ENCODE measurements at regions of chr3 and their contacts with region 1.

Region 1: DNA sequence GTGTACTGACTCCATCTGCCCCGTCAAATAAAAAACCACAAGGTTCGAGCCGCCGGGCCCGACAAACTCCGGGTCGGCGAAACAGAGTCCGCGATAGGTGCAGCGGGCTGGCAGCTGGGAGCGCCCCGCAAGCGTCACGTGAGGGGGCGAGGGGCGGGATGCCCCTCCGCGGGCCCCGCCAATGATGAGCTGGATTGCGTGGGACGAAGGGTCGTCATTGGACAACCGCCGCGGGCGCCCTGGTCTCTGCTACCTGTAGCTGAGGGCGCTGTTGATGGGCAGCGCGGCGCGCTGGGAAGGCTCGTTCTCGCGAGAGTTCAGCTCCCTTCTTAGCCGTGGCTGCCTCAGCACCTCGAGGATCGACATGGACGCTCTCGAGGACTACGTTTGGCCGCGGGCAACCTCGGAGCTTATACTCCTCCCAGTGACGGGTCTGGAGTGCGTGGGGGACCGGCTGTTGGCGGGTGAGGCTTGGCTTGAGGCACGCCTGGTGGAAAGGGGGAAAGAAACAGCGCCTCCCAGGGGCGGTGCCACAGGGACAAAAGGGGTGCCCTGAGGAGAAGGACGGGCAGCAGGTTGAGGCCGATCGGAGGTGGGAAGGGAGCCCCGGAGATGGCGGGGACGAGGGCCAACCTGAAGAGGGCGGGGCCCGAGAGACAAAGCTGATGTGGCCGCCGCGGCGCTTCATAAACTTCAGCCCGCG is at the start of gene WDR6:
- DNase-seq: peak; percentile 98
- ATAC-seq: peak; percentile 86
- H3K4me3 ChIP-seq: peak within 1 kb of the TSS; percentile 69 to 99 (median 94)
- H3K4me3 Mint-ChIP-seq: peak within 1 kb of the TSS; percentile 100
- H3K27ac ChIP-seq: peak within 1 kb of the TSS; percentile 95 to 96
- H3K27ac Mint-ChIP-seq: peak within 1 kb of the TSS; percentile 99
- H3K4me1 ChIP-seq: peaks cover 15 to 18% of the 10 kb centered on the region in 2 donors
- H3K4me1 Mint-ChIP-seq: peaks cover 27% of the 10 kb centered on the region
- H3K27me3 ChIP-seq: no peaks in the 10 kb centered on the region
- H3K27me3 Mint-ChIP-seq: no peaks in the 10 kb centered on the region
- CTCF ChIP-seq: peak; percentile 52
- total RNA-seq, gene WDR6: 270 and 287 TPM in 2 replicates

Region 2: DNA sequence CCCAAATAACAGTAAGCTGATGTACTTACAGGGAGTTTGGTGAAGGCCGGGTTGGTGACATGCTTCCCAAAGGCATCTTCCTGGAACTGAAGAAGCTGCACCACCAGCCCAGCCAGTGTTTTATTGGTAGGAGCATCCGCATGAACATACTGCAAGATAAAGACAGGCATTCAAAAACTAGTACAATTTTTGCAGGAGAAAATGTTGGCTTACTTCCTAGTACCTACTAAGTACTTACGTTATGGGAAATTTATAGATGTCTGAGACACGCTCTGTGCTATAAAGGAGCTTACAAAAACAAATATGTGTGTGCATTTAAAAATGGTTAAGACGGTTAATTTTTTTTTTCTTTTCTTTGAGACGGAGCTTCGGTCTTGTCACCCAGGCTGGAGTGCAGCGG is 1234.4 kb before region 1 on chr3:
- CTCF ChIA-PET with region 1: no interaction called
- POLR2A ChIA-PET with region 1: no interaction called
- intact Hi-C with region 1: no loop called
- DNase-seq: no peak
- ATAC-seq: no peak
- H3K4me3 ChIP-seq: no peak overlapping the region
- H3K4me3 Mint-ChIP-seq: no peak overlapping the region
- H3K27ac ChIP-seq: no peak overlapping the region
- H3K27ac Mint-ChIP-seq: no peak overlapping the region
- H3K4me1 ChIP-seq: peaks cover under 1 to 6% of the 10 kb centered on the region in 2 donors
- H3K4me1 Mint-ChIP-seq: peaks cover 20% of the 10 kb centered on the region
- H3K27me3 ChIP-seq: no peaks in the 10 kb centered on the region
- H3K27me3 Mint-ChIP-seq: no peaks in the 10 kb centered on the region
- CTCF ChIP-seq: no peak

Region 3: GRCh38 chr3:48119505-48120193 is 887.6 kb before region 1 on chr3:
- CTCF ChIA-PET with region 1: no interaction called
- POLR2A ChIA-PET with region 1: no interaction called
- intact Hi-C with region 1: no loop called
- DNase-seq: no peak
- ATAC-seq: no peak
- H3K4me3 ChIP-seq: no peak overlapping the region
- H3K4me3 Mint-ChIP-seq: no peak overlapping the region
- H3K27ac ChIP-seq: no peak overlapping the region
- H3K27ac Mint-ChIP-seq: no peak overlapping the region
- H3K4me1 ChIP-seq: no peaks in the 10 kb centered on the region
- H3K4me1 Mint-ChIP-seq: peaks cover 2% of the 10 kb centered on the region
- H3K27me3 ChIP-seq: no peaks in the 10 kb centered on the region
- H3K27me3 Mint-ChIP-seq: no peaks in the 10 kb centered on the region
- CTCF ChIP-seq: no peak

Region 4: DNA sequence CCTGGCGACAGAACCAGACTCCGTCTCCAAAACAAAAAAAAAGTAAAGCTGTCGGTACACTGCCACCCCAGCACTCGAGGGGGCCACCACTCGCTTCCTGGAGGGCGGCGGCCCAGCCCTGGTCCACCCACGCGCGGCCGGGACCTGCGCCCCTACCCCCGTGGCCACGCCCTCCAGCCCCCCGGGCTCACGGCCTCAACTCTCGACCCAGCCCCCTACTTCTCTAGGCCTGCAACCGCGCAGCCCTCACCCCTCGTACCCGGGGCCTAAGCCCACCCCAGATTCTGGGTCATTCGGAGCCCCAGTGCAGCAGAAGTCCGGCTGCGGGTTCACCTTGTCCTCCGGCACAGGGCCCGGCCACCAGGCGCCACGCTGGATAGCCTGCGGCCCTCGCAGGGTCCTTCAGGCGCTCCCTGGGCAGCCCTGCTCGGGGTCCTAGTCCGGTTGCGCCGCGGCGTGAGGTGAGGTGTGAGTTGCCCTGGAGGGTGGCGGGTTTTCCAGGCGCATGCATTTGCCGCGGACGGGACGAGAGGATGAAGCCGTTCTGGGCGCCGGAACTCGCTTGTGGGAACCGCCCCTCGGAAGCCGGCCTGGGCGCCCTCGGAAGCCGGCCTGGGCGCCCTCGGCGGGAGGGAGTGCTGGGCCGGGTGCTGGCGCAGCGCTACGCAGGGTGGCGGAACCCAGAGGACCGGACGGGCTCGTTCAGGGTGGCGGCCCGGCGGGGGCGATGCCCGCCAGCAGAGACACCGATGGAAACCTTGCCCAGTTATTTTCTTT is 706.0 kb before region 1 on chr3:
- CTCF ChIA-PET with region 1: no interaction called
- POLR2A ChIA-PET with region 1: interaction called, 10 read pairs
- intact Hi-C with region 1: loop called (anchors 2 kb)
- DNase-seq: peak; percentile 94
- ATAC-seq: peak; percentile 91
- H3K4me3 ChIP-seq: peak within 1 kb of the TSS; percentile 41 to 90 (median 82)
- H3K4me3 Mint-ChIP-seq: peak within 1 kb of the TSS; percentile 97
- H3K27ac ChIP-seq: peak within 1 kb of the TSS; percentile 92 to 96
- H3K27ac Mint-ChIP-seq: peak within 1 kb of the TSS; percentile 99
- H3K4me1 ChIP-seq: peaks cover 17 to 25% of the 10 kb centered on the region in 2 donors
- H3K4me1 Mint-ChIP-seq: peaks cover 55% of the 10 kb centered on the region
- H3K27me3 ChIP-seq: no peaks in the 10 kb centered on the region
- H3K27me3 Mint-ChIP-seq: no peaks in the 10 kb centered on the region
- CTCF ChIP-seq: no peak

Region 5: GRCh38 chr3:49021813-49022687 is 14.8 kb after region 1 on chr3 and contains the start of gene NDUFAF3:
- CTCF ChIA-PET with region 1: interaction called, 52 read pairs
- POLR2A ChIA-PET with region 1: interaction called, 116 read pairs
- intact Hi-C with region 1: loop called (anchors 1 kb)
- DNase-seq: peak; percentile 96
- ATAC-seq: peak; percentile 66
- H3K4me3 ChIP-seq: peak within 1 kb of the TSS; percentile 66 to 92 (median 89)
- H3K4me3 Mint-ChIP-seq: peak within 1 kb of the TSS; percentile 96
- H3K27ac ChIP-seq: peak within 1 kb of the TSS; percentile 96 to 98
- H3K27ac Mint-ChIP-seq: peak within 1 kb of the TSS; percentile 97
- H3K4me1 ChIP-seq: peaks cover 36 to 60% of the 10 kb centered on the region in 2 donors
- H3K4me1 Mint-ChIP-seq: peaks cover 65% of the 10 kb centered on the region
- H3K27me3 ChIP-seq: no peaks in the 10 kb centered on the region
- H3K27me3 Mint-ChIP-seq: no peaks in the 10 kb centered on the region
- CTCF ChIP-seq: peak; percentile 95
- total RNA-seq, gene NDUFAF3: 67.0 and 67.5 TPM in 2 replicates

Region 6: GRCh38 chr3:49028673-49029562 is 21.7 kb after region 1 on chr3 and contains the start of gene IMPDH2:
- CTCF ChIA-PET with region 1: interaction called, 14 read pairs
- POLR2A ChIA-PET with region 1: interaction called, 20 read pairs
- intact Hi-C with region 1: no loop called
- DNase-seq: peak; percentile 98
- ATAC-seq: peak; percentile 93
- H3K4me3 ChIP-seq: peak within 1 kb of the TSS; percentile 72 to 93 (median 73)
- H3K4me3 Mint-ChIP-seq: peak within 1 kb of the TSS; percentile 98
- H3K27ac ChIP-seq: peak within 1 kb of the TSS; percentile 86 to 92
- H3K27ac Mint-ChIP-seq: peak within 1 kb of the TSS; percentile 98
- H3K4me1 ChIP-seq: peaks cover 14 to 39% of the 10 kb centered on the region in 2 donors
- H3K4me1 Mint-ChIP-seq: peaks cover 45% of the 10 kb centered on the region
- H3K27me3 ChIP-seq: no peaks in the 10 kb centered on the region
- H3K27me3 Mint-ChIP-seq: no peaks in the 10 kb centered on the region
- CTCF ChIP-seq: no peak
- total RNA-seq, gene IMPDH2: 186 and 193 TPM in 2 replicates

Region 7: DNA sequence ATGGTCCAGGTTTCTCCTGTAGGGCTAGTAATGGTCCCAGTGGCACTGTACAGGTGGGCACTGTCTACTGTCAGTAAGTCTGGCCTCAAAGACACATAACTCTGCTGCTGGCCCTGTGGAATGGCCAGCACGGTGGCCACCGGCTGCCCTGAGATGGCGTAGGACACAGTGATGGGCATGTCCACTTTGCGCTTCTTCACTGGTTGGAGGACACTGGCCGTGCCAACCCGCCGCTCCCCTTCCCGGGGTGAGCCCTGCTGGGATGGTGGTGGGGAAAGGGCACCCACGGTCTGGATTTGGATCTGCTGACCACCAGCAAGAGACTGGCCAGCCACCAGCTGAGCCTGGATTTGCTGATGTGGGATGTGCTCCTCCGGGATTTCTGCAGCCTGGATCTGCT is 50.0 kb after region 1 on chr3:
- CTCF ChIA-PET with region 1: no interaction called
- POLR2A ChIA-PET with region 1: no interaction called
- intact Hi-C with region 1: no loop called
- DNase-seq: no peak
- ATAC-seq: no peak
- H3K4me3 ChIP-seq: no peak overlapping the region
- H3K4me3 Mint-ChIP-seq: no peak overlapping the region
- H3K27ac ChIP-seq: no peak overlapping the region
- H3K27ac Mint-ChIP-seq: no peak overlapping the region
- H3K4me1 ChIP-seq: no peaks in the 10 kb centered on the region
- H3K4me1 Mint-ChIP-seq: no peaks in the 10 kb centered on the region
- H3K27me3 ChIP-seq: no peaks in the 10 kb centered on the region
- H3K27me3 Mint-ChIP-seq: no peaks in the 10 kb centered on the region
- CTCF ChIP-seq: no peak

Region 8: GRCh38 chr3:49428697-49429100 is 421.5 kb after region 1 on chr3:
- CTCF ChIA-PET with region 1: no interaction called
- POLR2A ChIA-PET with region 1: interaction called, 3 read pairs
- intact Hi-C with region 1: loop called (anchors 1 kb)
- DNase-seq: no peak
- ATAC-seq: no peak
- H3K4me3 ChIP-seq: peak overlapping the region; percentile 47 to 77 (median 72)
- H3K4me3 Mint-ChIP-seq: peak overlapping the region; percentile 91
- H3K27ac ChIP-seq: peak overlapping the region; percentile 77 to 89
- H3K27ac Mint-ChIP-seq: peak overlapping the region; percentile 94
- H3K4me1 ChIP-seq: peaks cover 7 to 11% of the 10 kb centered on the region in 2 donors
- H3K4me1 Mint-ChIP-seq: peaks cover 11% of the 10 kb centered on the region
- H3K27me3 ChIP-seq: no peaks in the 10 kb centered on the region
- H3K27me3 Mint-ChIP-seq: no peaks in the 10 kb centered on the region
- CTCF ChIP-seq: no peak

Measured in B cell (primary cell).